ENCODE measurements at regions of chr14 and their contacts with region 1.

Region 1: DNA sequence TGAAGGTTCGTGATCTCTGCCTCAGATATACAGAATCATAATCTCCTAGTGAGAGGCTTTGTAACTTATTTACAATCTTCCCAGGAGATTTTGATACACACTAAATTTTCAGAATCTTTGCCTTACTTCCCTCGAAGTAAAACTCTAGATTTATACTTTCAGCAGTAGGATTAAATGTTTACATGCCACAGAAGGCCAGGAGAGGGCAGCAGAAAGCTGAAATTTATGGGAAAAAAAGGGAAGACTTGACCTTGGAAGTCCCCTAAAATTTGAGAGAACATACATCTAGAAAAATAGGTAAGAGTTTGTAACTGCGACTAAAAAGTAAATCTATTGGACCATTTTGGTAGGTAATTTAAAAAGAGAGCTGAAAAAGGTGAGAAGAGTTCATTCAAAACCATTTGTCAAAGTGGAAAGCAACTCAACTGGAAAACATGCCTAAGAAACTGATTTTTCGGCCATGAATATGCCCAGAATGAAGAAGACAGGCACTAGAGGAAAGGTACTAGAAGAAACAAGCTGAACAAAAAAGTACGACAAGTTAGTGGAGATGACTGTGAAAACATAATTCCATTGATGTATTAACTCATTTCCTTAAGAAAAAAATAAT is 242.0 kb upstream of the MDGA2 start:
- DNase-seq: peak; percentile 13
- ATAC-seq: no peak
- H3K4me3 ChIP-seq: no peak overlapping the region
- H3K27ac ChIP-seq: no peak overlapping the region
- H3K4me1 ChIP-seq: no peaks in the 10 kb centered on the region
- H3K27me3 ChIP-seq: no peaks in the 10 kb centered on the region
- CTCF ChIP-seq: peak; percentile 44
- POLR2A ChIP-seq: no peak
- RAD21 ChIP-seq: peak; percentile 36

Region 2: GRCh38 chr14:47675466-47676314 is 241.8 kb before region 1 on chr14 and contains the start of gene MDGA2:
- CTCF ChIA-PET with region 1: no interaction called
- POLR2A ChIA-PET with region 1: no interaction called
- dilution Hi-C with region 1: no loop called
- in situ Hi-C with region 1: no loop called
- intact Hi-C with region 1: no loop called
- DNase-seq: no peak
- ATAC-seq: no peak
- H3K4me3 ChIP-seq: no peak within 1 kb of the TSS
- H3K27ac ChIP-seq: no peak within 1 kb of the TSS
- H3K4me1 ChIP-seq: no peaks in the 10 kb centered on the region
- H3K27me3 ChIP-seq: peaks cover 11% of the 10 kb centered on the region; the same call in 1 of the 2 replicates
- CTCF ChIP-seq: no peak
- POLR2A ChIP-seq: no peak
- RAD21 ChIP-seq: no peak
- total RNA-seq, gene MDGA2: not detected in 2 replicates

Region 3: GRCh38 chr14:48398675-48399282 is 481.3 kb after region 1 on chr14:
- CTCF ChIA-PET with region 1: no interaction called
- POLR2A ChIA-PET with region 1: no interaction called
- dilution Hi-C with region 1: no loop called
- in situ Hi-C with region 1: no loop called
- intact Hi-C with region 1: loop called (anchors 2 kb)
- DNase-seq: peak; percentile 47
- ATAC-seq: peak; percentile 76
- H3K4me3 ChIP-seq: no peak overlapping the region
- H3K27ac ChIP-seq: no peak overlapping the region
- H3K4me1 ChIP-seq: no peaks in the 10 kb centered on the region
- H3K27me3 ChIP-seq: no peaks in the 10 kb centered on the region
- CTCF ChIP-seq: peak; percentile 59
- POLR2A ChIP-seq: no peak
- RAD21 ChIP-seq: peak; percentile 52

Region 4: DNA sequence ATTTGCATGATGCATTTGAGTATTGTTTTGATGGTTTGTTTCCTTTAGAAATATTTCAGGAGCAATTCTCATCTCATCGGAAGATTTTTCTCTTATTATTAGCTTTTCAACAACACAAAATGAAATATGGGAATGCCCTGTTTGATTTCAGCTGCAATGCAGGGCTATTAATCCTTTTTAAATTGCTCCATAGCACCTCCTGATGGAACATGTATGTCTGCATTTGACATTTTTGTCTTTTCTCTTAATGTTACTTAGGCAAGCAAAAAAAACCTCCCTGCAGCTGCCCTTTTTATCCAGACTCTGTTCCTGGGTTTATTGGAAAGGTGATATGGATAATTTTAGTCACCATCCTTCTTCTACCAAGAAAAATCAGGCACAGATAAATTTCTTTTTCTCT is 772.9 kb after region 1 on chr14:
- CTCF ChIA-PET with region 1: no interaction called
- POLR2A ChIA-PET with region 1: no interaction called
- dilution Hi-C with region 1: no loop called
- in situ Hi-C with region 1: no loop called
- intact Hi-C with region 1: loop called (anchors 5 kb)
- DNase-seq: peak; percentile 10
- ATAC-seq: no peak
- H3K4me3 ChIP-seq: no peak overlapping the region
- H3K27ac ChIP-seq: no peak overlapping the region
- H3K4me1 ChIP-seq: peaks cover 4% of the 10 kb centered on the region
- H3K27me3 ChIP-seq: no peaks in the 10 kb centered on the region
- CTCF ChIP-seq: no peak; the same call in 1 of the 2 replicates
- POLR2A ChIP-seq: no peak
- RAD21 ChIP-seq: peak; percentile 33; the same call in 1 of the 2 replicates

Region 5: GRCh38 chr14:49173765-49174373 is 1256.4 kb after region 1 on chr14:
- CTCF ChIA-PET with region 1: no interaction called
- POLR2A ChIA-PET with region 1: no interaction called
- dilution Hi-C with region 1: no loop called
- in situ Hi-C with region 1: loop called (anchors 10 kb)
- intact Hi-C with region 1: loop called (anchors 1 kb)
- DNase-seq: peak; percentile 69
- ATAC-seq: peak; percentile 91
- H3K4me3 ChIP-seq: no peak overlapping the region
- H3K27ac ChIP-seq: no peak overlapping the region
- H3K4me1 ChIP-seq: no peaks in the 10 kb centered on the region
- H3K27me3 ChIP-seq: no peaks in the 10 kb centered on the region
- CTCF ChIP-seq: peak; percentile 69
- POLR2A ChIP-seq: no peak
- RAD21 ChIP-seq: peak; percentile 79

Region 6: GRCh38 chr14:49497725-49498348 is 1580.4 kb after region 1 on chr14:
- CTCF ChIA-PET with region 1: no interaction called
- POLR2A ChIA-PET with region 1: no interaction called
- dilution Hi-C with region 1: no loop called
- in situ Hi-C with region 1: no loop called
- intact Hi-C with region 1: loop called (anchors 5 kb)
- DNase-seq: peak; percentile 74
- ATAC-seq: peak; percentile 96
- H3K4me3 ChIP-seq: no peak overlapping the region
- H3K27ac ChIP-seq: no peak overlapping the region
- H3K4me1 ChIP-seq: no peaks in the 10 kb centered on the region
- H3K27me3 ChIP-seq: peaks cover 18% of the 10 kb centered on the region
- CTCF ChIP-seq: peak; percentile 78
- POLR2A ChIP-seq: no peak
- RAD21 ChIP-seq: peak; percentile 71

Measured in IMR-90 (cell line).